ENCODE measurements at regions of chr1 and their contacts with region 1.

Region 1: GRCh38 chr1:198788561-198789064 is 149.8 kb downstream of the PTPRC start:
- DNase-seq: peak; percentile 51
- H3K4me3 Mint-ChIP-seq: no peak overlapping the region
- H3K27ac Mint-ChIP-seq: no peak overlapping the region
- H3K4me1 Mint-ChIP-seq: peaks cover 9% of the 10 kb centered on the region
- H3K27me3 Mint-ChIP-seq: no peaks in the 10 kb centered on the region

Region 2: GRCh38 chr1:198387587-198387986 is 401.0 kb before region 1 on chr1:
- CTCF ChIA-PET with region 1: no interaction called
- intact Hi-C with region 1: loop called (anchors 10 kb)
- DNase-seq: no peak
- H3K4me3 Mint-ChIP-seq: no peak overlapping the region
- H3K27ac Mint-ChIP-seq: no peak overlapping the region
- H3K4me1 Mint-ChIP-seq: no peaks in the 10 kb centered on the region
- H3K27me3 Mint-ChIP-seq: no peaks in the 10 kb centered on the region